GM10248 (cell line): ENCODE measurements at regions of chr17 and their contacts with region 1.

Region 1: GRCh38 chr17:42422958-42423712 is at the start of gene CAVIN1:
- DNase-seq: peak; percentile 69
- CTCF ChIP-seq: no peak

Region 2: GRCh38 chr17:42405963-42406495 is 17.1 kb before region 1 on chr17:
- CTCF ChIA-PET with region 1: interaction called, 10 read pairs
- POLR2A ChIA-PET with region 1: no interaction called
- DNase-seq: peak; percentile 82
- CTCF ChIP-seq: peak; percentile 95

Region 3: DNA sequence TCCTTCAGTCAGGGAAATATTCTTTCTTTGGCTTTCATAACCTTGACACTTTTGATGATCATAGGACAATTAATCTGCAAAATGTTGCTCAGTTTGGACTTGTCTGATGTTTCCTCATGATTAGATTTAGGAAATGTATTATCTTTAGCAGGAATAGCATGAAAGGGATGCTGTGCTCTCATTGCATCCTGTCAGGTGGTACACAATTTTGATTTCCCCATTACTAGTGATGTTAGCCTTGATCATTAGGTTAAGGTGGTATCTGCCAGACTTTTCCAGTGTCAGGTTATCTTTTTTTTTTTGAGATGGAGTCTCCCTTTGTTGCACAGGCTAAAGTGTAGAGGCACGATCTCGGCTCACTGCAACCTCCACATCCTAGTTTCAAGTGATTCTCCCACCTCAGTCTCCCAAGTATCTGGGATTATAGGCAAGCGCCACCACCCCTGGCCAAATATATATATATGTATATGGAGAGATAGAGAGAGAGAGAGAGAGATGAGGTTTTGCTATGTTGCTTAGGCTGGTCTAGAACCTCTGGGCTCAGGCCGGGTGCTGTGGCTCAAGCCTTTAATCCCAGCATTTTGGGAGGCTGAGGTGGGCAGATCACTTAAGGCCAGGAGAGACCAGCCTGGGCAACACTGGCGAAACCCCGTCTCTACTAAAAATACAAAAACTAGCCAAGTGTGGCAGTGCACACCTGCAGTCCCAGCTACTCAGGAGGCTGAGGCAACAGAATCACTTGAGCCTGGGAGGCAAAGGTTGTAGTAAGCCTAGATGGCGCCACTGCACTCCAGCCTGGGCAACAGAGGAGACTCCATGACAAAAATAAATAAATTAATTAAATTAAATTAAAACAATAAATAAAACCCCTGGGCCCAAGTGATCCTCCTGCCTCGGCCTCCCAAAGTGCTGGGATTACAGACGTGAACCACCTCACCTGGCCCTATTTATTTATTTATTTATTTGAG is 15.7 kb after region 1 on chr17:
- CTCF ChIA-PET with region 1: interaction called, 18 read pairs
- POLR2A ChIA-PET with region 1: no interaction called
- DNase-seq: no peak
- CTCF ChIP-seq: peak; percentile 50

Region 4: DNA sequence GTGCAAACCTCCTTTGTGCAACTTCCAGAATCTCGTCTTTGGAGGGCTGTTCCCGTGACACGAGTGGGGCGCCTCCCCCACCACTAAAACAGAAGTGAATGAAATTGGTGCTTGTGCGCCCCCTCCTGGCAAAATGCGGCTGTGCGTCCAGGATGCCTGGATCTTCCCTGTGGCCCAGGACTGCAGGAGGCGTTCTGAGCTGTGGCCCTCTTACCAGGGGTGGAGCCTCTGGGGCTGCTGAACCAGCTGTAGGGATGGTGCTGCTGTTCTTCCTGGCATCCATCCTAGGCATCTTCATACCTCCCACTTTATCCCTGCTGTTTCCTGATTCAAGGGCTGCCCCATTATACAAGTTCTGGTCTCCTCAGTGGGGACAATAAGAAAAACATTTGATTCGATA is 94.4 kb after region 1 on chr17:
- CTCF ChIA-PET with region 1: interaction called, 13 read pairs
- POLR2A ChIA-PET with region 1: no interaction called
- DNase-seq: peak; percentile 84
- CTCF ChIP-seq: peak; percentile 95